Activated CD8-positive, alpha-beta T cell treated with anti-CD3 and anti-CD28 coated beads, Interleukin-2, amount 10 ng/mL, durations not matched to agents 7 days and 5 days (primary cell): ENCODE measurements at regions of chr14 and their contacts with region 1.

Region 1: GRCh38 chr14:23076785-23077408 is 18.0 kb downstream of the ACIN1 start:
- DNase-seq: peak; percentile 56
- ATAC-seq: peak; percentile 63
- H3K4me3 Mint-ChIP-seq: no peak overlapping the region
- H3K27ac Mint-ChIP-seq: no peak overlapping the region
- H3K4me1 Mint-ChIP-seq: peaks cover 5% of the 10 kb centered on the region
- H3K27me3 Mint-ChIP-seq: no peaks in the 10 kb centered on the region

Region 2: DNA sequence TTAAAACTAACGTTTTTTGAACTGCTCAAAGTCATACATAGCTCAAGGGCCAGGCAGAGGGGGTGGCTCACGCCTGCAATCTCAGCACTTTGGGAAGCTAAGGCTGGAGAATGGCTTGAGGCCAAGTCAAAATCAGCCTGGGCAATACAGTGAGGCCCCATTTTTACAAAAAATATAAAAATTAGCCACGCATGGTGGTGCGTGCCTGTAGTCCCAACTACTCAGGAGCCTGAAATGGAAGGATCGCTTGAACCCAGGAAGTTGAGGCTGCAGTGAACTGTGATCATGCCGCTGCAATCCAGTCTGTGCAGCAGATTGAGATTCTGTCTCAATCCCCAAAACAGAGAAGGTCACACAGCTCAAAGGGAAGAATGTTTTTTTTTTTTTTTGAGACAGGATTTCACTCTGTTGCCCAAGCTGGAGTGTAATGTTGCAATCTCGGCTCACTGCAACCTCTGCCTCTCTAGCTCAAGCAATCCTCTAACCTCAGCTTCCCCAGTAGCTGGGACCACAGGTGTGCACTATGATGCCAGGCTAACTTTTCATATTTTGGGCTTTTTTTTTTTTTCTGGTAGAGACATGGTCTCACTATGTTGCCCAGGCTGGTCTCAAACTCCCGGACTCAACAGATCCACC is 160.9 kb before region 1 on chr14:
- CTCF ChIA-PET with region 1: no interaction called
- POLR2A ChIA-PET with region 1: no interaction called
- DNase-seq: no peak
- ATAC-seq: no peak
- H3K4me3 Mint-ChIP-seq: no peak overlapping the region
- H3K27ac Mint-ChIP-seq: peak overlapping the region; percentile 9
- H3K4me1 Mint-ChIP-seq: peaks cover 42% of the 10 kb centered on the region
- H3K27me3 Mint-ChIP-seq: no peaks in the 10 kb centered on the region

Region 3: GRCh38 chr14:23104591-23105347 is 27.9 kb after region 1 on chr14 and contains the start of gene CIROP:
- CTCF ChIA-PET with region 1: interaction called, 34 read pairs
- POLR2A ChIA-PET with region 1: interaction called, 3 read pairs
- DNase-seq: no peak
- ATAC-seq: no peak
- H3K4me3 Mint-ChIP-seq: no peak within 1 kb of the TSS
- H3K27ac Mint-ChIP-seq: no peak within 1 kb of the TSS
- H3K4me1 Mint-ChIP-seq: no peaks in the 10 kb centered on the region
- H3K27me3 Mint-ChIP-seq: no peaks in the 10 kb centered on the region
- total RNA-seq, gene CIROP: not detected

Region 4: DNA sequence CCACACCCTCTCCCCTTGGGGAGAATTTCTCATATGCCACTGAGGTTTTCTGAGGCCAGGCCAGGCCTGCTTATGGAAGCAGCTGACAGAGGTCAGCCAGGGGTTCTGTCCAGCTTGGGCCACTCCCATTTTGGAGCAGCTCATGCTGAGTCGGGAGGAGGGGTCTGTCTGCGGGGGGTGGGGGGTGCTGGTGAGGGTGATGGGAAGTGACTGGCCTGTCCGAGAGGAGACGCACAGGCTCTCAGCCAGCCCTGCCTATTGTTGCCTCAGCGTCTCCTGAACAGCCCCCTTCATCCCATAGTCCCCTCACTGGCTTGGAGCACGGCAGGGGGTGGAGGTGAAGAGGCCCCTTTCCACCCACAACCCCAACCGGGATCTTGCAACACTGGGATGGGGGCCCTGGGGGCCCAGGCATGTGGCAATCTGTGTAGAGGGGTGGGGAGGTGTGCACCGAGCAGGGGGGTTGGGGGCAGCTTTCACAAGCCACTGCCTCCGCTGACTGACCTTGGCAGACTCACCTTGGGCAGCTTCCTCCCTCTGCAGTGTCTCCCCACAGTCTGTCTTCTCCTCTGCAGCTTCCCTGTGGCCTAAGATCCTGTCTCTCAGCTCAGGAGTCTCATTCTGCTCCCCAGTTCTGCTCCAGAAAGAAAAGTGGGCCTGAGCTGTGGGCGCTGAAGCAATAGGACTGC is 36.7 kb after region 1 on chr14:
- CTCF ChIA-PET with region 1: interaction called, 34 read pairs
- POLR2A ChIA-PET with region 1: no interaction called
- DNase-seq: no peak
- ATAC-seq: no peak
- H3K4me3 Mint-ChIP-seq: no peak overlapping the region
- H3K27ac Mint-ChIP-seq: no peak overlapping the region
- H3K4me1 Mint-ChIP-seq: peaks cover 7% of the 10 kb centered on the region
- H3K27me3 Mint-ChIP-seq: no peaks in the 10 kb centered on the region

Region 5: GRCh38 chr14:23186913-23187654 is 110.2 kb after region 1 on chr14:
- CTCF ChIA-PET with region 1: interaction called, 24 read pairs
- POLR2A ChIA-PET with region 1: no interaction called
- DNase-seq: peak; percentile 47
- ATAC-seq: no peak
- H3K4me3 Mint-ChIP-seq: no peak overlapping the region
- H3K27ac Mint-ChIP-seq: no peak overlapping the region
- H3K4me1 Mint-ChIP-seq: no peaks in the 10 kb centered on the region
- H3K27me3 Mint-ChIP-seq: peaks cover 12% of the 10 kb centered on the region